ENCODE measurements at regions of chr7 and their contacts with region 1.

Region 1: DNA sequence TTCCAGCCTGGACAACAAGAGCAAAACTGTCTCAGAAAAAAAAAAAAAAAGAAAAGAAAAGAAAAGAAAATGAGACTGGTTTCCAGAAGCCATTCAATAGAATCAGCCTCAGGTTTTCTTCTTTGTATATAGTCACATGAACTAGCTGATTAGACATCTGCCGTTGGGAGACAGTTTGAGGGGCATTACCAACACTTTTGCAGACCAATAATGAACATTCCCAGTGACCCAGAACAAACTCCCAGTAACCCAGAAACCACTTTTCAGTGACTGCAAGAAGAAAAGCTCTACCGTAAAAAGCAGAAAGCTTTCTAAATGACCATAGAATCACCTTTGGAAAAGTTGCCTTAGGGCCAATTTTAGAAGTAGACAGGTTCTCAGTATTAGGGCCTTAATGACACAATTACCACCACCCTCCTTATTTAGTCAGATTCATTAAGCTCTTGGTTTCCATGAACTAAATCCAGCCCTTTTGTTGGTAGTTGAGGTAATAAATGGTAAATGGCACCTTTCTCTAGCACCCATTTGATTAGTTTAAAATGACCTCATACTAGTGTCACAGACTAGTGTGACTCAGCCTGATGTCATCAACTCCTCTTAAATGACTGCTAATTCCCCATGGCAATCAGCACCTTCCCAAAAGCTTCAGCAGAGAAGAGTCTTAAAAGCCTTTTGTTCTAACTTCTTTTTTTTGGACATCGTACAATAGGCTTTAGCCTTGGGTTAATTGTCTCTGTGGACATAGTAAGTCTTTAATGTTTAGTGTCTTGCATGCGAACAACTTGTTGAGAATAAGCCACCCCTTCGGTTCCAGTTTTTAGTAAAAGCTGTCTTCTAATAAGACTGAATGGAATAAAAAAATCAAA is 33.6 kb upstream of the XRCC2 start:
- DNase-seq: no peak
- CTCF ChIP-seq: no peak

Region 2: DNA sequence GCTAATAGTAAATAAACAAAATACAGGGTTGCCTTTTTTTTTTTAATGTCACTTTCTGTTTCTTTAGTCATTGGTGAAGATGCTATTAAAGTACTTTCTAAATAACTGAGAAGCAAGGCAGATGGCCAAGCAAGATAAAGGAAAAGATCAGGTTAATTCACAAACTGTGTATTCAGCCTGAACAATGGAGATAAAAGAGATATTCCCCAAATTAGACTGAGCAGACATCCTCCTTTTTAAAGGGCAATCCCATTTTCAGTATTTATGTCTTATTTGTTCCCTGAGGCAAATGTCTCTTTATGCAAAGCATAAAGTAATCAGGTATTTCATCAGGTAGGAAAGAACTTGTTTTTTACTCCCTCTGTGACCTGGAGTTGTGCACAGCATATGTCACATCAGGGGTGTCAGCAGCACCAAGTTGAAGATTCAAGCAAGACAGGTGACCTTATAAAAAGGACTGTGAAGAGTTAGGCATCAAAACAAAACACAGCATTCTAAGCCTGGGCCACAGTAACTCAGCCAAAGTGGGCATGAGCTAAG is 10.3 kb before region 1 on chr7:
- CTCF ChIA-PET with region 1: interaction called, 17 read pairs
- POLR2A ChIA-PET with region 1: no interaction called
- DNase-seq: no peak
- CTCF ChIP-seq: no peak

Measured in GM10248 (cell line).